ENCODE measurements at regions of chr11 and their contacts with region 1.

Region 1: DNA sequence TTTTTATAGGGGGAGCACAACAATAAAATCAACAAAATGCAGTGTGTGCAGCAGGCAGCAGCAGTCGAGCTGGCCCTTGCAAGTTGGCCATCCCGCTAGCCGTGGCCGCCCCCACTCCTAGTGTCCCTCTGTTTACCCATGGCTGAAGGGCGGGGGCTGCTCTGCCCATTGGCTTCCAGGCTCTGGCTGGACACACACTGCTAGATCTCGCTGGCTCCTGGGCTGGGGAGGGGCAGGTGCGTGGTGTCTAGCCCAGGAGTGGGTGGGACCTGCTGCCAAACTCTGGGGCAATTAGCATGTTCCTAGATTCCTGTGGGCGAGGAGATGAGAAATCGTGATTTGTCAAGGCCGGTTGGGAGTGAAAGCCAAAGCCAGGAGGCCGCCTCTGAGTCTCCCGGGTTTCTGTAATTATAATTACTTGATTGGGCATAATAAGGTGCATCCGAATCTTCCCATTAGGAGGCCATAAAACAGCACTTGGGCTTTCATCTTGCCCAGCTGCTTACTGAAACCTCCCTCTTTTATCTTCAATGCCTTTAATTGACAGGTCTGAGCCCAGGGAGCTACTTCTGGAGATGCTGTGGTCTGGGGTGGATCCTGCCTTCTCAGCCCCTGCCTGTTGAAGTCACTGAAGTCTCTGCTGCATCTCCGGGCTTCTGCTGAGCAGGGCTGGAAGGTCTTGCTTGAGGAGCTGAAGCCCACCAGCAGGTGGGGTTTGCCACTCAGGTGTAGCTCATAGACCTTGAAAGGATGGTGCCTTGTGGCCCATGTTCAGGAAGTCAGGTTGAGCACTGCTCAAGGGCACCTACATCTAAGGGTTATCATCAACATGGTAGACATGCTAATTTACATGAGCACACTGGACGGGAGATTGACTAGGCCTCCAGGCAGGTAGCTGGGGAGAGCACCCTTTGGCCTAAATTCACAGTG is 44.5 kb upstream of the DKK3 start:
- DNase-seq: no peak
- ATAC-seq: no peak

Region 2: DNA sequence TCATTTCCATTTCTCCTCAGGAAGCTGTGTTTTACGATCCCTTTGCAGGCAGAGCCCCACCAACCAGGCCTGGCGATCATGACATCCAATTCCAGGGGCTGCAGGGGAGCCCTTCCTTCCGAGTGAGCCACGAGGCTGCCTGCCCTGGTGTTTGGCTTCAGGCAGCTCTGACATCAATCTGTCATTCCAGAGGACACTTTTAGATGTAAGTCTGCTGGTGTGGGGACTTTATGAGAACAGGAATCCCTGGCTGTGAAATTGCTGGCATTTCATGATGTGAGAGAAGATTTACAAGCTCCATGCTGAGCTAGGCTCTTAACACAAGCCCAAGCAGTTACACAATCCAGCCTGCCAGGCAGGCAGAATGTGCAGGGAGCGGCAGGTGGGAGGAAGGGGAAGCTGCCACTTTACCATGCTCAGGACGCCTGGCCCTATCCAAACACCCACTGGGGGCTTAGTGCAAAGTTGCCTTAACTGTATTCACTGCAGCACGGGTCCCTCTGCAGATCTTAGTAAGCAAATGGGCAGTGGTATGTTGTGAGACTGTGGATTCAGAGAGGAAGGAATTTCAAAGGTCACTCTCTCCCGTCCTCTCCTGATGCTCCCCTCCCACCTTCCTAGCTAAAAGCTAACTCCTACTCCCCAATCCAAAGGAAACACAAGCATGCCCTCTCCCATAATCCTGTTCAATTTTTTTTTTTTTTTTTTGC is 14.0 kb after region 1 on chr11:
- intact Hi-C with region 1: no loop called
- DNase-seq: no peak
- ATAC-seq: peak; percentile 55

Region 3: GRCh38 chr11:12100841-12101242 is 47.9 kb after region 1 on chr11:
- intact Hi-C with region 1: loop called (anchors 5 kb)
- DNase-seq: no peak
- ATAC-seq: peak; percentile 79